ENCODE measurements at regions of chr13 and their contacts with region 1.

Region 1: DNA sequence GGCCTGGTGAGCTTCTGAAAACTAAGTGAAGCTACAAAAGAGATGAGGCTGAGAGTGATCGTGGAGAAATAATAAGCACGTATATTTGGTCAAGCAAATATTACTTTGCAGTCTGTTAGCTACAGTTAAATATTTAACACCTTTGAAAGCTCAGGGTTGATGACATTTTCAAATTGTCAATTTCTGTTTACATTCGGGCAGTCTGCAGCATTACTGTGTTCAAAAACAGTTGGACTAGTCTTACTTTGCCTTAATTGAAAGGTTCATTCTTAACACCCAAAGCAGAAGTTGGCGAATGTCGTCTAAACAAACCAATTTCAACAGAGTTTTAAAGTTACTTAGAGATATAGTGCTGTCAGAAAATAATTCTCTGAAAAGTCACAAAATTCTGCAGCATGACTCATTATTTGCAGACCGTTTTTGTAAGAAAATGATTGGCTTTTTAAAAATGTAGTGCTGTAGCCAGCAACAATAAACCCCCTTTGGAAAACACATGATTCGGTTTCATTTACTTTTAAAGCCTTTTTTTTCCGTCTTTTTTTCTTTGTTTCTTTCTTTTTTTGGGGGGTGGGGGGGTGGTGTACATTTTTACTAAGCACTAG is 549.0 kb downstream of the GPC6 start:
- DNase-seq: no peak
- H3K4me3 ChIP-seq: no peak overlapping the region
- H3K27ac ChIP-seq: peak overlapping the region in 1 of 2 donors; percentile 66
- H3K4me1 ChIP-seq: peaks cover 0 to 17% of the 10 kb centered on the region in 2 donors
- H3K27me3 ChIP-seq: no peaks in the 10 kb centered on the region
- CTCF ChIP-seq: no peak

Region 2: DNA sequence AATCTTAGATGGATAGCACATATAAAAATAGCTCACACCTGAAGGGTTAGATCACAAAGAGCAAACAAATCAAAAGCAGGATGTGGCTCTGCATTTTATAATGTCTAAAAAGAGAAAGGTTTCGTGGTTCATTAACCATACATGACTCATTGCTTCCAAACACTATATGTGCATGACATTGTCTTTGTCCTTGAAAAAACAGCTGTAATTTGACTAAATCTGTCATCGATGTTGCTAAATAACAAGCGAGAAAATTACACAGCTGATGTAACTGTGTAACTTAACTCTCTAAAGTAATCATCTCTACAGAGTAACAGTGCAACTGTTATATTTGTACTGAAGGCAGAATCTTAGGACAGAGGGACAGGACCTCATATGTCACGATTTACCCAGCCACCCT is 932.1 kb before region 1 on chr13:
- intact Hi-C with region 1: loop called (anchors 10 kb)
- DNase-seq: no peak
- H3K4me3 ChIP-seq: no peak overlapping the region
- H3K27ac ChIP-seq: no peak overlapping the region
- H3K4me1 ChIP-seq: peaks cover 0 to 20% of the 10 kb centered on the region in 2 donors
- H3K27me3 ChIP-seq: no peaks in the 10 kb centered on the region
- CTCF ChIP-seq: no peak

Region 3: DNA sequence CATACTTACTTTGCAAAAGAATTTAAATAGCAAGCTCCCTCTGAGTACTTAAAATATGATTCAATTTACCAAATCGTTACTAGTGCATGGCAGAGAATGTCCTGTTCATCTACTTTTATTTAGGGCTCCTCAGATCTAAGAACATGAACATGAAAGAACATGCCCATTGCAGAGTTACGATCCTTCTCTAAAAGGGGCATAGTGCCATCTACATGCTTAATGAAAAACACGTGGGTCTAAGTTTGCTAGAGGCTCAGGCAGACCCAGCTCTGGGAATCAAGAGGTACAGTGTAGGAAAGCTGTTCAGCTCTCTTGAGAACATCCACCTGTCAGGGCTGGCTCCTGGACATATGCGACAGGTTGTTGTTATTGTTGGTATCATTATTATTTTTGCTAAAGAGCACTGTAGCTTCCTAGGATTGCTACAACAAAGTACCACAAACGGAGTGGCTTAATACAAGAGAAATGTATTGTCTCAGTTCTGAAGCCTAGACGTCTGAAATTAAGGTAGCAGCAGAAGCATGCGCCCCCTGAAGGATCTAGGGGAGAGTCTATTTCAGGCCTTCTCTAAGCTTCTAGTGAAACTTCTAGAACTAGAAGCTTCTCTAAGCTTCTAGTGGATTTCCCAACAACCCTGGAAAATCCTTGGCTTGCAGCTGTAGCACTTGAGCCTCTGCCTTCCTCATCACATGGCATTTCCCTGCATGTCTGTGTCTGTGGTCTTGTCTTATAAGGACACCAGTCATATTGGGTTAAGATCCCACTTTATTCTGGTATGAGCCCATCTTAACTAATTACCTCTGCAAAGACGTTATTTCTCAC is 570.0 kb after region 1 on chr13:
- intact Hi-C with region 1: loop called (anchors 10 kb)
- DNase-seq: no peak
- H3K4me3 ChIP-seq: no peak overlapping the region
- H3K27ac ChIP-seq: no peak overlapping the region
- H3K4me1 ChIP-seq: peaks cover 0 to 7% of the 10 kb centered on the region in 2 donors
- H3K27me3 ChIP-seq: no peaks in the 10 kb centered on the region
- CTCF ChIP-seq: peak in 1 of 3 experiments; percentile 3

Region 4: DNA sequence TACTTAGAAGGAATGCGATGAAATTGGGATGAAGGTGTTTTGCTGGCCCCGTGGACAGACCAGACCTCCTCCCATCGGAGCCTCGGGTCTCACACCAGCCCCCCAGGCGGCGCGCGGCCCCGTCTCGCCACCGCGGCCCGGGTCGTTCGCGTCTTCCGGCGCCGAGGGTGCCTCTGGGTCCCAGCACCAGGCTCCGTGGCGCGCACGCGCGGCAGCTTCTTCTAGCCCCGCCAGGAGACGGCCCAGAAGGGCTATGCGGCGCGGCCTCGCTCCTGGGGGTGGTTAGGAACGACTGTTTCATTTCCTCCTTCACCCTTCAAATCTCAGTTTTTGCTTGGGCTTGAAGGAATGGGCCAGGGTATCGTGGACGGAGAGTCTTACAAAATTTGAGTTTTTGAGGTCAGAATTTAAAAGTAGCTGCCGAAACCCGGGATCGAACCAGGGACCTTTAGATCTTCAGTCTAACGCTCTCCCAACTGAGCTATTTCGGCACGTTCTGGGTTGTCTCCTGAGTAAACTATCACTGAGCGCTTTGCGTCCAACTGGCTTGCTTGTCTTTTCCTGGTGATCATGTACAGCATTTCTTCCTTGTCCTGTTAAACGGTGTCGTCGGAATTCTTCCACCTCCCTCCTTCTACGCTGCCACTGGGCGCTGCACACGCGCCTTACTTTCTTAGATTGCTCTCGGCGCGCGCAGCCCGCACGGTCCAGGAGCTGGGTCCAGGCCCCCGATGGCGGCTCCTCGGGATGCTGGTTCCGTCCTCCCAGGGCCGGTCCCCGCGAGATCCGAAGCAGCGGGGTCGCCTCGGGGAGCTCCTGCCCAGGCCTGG is 773.8 kb after region 1 on chr13:
- intact Hi-C with region 1: loop called (anchors 10 kb)
- DNase-seq: peak; percentile 68 to 96
- H3K4me3 ChIP-seq: peak overlapping the region; percentile 72 to 84
- H3K27ac ChIP-seq: peak overlapping the region; percentile 96 to 99
- H3K4me1 ChIP-seq: peaks cover 2 to 5% of the 10 kb centered on the region in 2 donors
- H3K27me3 ChIP-seq: no peaks in the 10 kb centered on the region
- CTCF ChIP-seq: peak in 1 of 3 experiments; percentile 12